MCF 10A (cell line): ENCODE measurements at regions of chr18 and their contacts with region 1.

Region 1: DNA sequence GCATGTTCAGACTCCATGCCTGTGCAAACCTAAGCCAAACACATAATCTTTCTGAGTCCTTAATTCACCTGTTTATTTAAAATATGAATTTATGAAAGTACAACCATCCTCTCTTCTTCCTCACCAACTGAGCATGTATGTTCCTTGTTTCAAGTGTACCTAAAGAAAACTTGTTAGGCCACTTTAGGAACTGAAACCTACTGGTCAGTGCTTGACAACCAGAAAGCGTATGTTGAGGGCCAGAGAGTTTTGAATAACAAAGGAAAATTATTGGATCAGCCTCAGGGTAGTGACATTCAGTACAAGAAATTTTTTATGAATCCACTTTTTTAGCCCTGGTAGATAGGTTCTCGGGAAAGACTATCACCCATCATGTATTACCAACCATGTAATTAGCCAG is 847.6 kb upstream of the CELF4 start:
- DNase-seq: no peak
- H3K4me3 Mint-ChIP-seq: no peak overlapping the region
- H3K27ac Mint-ChIP-seq: no peak overlapping the region
- H3K4me1 Mint-ChIP-seq: no peaks in the 10 kb centered on the region
- H3K27me3 Mint-ChIP-seq: no peaks in the 10 kb centered on the region
- CTCF ChIP-seq: no peak

Region 2: GRCh38 chr18:37778417-37779165 is 634.6 kb before region 1 on chr18:
- CTCF ChIA-PET with region 1: no interaction called
- POLR2A ChIA-PET with region 1: no interaction called
- intact Hi-C with region 1: loop called (anchors 5 kb)
- DNase-seq: peak; percentile 59
- H3K4me3 Mint-ChIP-seq: no peak overlapping the region
- H3K27ac Mint-ChIP-seq: no peak overlapping the region
- H3K4me1 Mint-ChIP-seq: no peaks in the 10 kb centered on the region
- H3K27me3 Mint-ChIP-seq: peaks cover 21% of the 10 kb centered on the region
- CTCF ChIP-seq: peak; percentile 81